PC-9 (cell line): ENCODE measurements at regions of chr9 and their contacts with region 1.

Region 1: DNA sequence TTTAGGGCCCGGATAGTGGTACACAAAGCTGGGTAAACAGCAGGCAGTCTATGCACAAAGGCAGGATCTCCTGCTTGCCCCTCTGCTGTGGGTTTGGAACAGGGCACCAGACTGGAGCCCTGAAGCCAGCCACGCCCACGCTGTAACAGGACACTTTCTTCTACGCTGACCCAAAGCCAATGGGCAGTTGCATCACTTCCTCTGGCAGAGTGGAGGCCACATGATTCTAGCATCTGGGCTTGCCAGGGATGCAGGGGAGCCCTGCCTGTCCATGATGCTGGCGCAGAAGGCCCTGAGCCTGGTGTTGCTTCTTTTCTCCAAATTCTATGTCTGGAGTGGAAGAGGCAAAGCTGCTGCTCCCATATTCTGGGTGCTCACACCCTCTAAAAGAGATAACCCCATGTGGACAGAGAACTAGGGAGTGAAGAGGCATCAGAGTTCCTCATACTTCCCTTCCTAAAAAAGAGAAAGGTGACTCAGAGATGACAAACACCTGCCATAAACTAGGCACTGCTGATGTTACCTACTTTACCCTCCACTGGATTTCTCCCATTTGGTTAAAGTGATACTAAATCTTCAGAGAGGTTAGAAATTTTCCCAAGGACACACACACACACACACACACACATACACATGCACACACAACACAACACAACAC is 260.3 kb upstream of the KLF4 start:
- DNase-seq: peak; percentile 86 to 87
- H3K4me3 ChIP-seq: peak overlapping the region; percentile 25; the same call in 1 of the 2 replicates
- H3K27ac ChIP-seq: peak overlapping the region; percentile 99
- H3K4me1 ChIP-seq: peaks cover 62% of the 10 kb centered on the region
- H3K27me3 ChIP-seq: no peaks in the 10 kb centered on the region
- CTCF ChIP-seq: no peak

Region 2: DNA sequence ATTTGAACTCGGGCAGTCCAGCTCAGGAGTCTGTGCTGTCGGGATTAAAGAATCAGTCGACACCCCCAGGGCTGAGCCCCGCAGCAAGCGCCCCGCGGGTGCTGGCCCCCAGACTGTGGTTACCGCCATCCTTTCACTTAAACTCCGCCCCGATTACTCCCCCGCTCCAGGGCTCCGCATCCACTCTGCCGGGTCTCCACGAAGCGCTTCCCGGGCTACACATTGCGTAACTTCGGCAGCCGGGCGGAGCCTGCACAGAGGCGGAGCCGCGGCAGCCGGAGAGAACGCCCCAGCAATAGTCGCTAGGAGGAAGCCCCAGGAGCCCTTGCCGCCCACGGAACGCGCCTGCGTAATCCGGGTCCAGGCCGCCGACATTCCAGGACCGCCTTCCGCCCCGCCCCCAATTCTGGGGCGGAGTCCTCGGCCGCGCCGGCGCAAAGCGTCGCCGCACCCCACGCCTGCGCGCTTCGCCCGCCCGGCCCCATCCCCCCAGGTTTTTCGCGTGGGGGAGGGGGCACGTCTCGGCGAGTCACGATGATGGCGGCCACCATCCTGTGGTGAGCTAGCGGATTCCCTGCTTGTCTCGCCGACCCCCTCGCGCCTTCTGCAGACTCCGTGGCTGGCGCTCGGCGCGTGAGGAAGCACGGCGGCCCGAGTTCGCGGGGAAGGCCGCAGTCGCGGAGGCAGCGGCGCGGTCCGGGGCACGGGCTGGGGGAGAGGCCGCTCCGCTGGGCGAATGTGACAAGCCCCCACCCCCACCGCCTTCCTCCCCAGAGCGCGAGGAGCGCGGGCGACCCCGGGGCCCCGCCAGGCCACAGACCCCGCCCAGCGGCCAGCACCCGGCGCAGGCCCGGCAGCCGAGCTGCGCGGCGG is 466.9 kb before region 1 on chr9 and contains the start of gene RAD23B:
- CTCF ChIA-PET with region 1: no interaction called
- POLR2A ChIA-PET with region 1: no interaction called
- intact Hi-C with region 1: loop called (anchors 10 kb)
- DNase-seq: peak; percentile 94 to 99
- H3K4me3 ChIP-seq: peak within 1 kb of the TSS; percentile 77
- H3K27ac ChIP-seq: peak within 1 kb of the TSS; percentile 88
- H3K4me1 ChIP-seq: peaks cover 58% of the 10 kb centered on the region
- H3K27me3 ChIP-seq: no peaks in the 10 kb centered on the region
- CTCF ChIP-seq: no peak
- total RNA-seq, gene RAD23B: 164 and 176 TPM in 2 replicates

Region 3: DNA sequence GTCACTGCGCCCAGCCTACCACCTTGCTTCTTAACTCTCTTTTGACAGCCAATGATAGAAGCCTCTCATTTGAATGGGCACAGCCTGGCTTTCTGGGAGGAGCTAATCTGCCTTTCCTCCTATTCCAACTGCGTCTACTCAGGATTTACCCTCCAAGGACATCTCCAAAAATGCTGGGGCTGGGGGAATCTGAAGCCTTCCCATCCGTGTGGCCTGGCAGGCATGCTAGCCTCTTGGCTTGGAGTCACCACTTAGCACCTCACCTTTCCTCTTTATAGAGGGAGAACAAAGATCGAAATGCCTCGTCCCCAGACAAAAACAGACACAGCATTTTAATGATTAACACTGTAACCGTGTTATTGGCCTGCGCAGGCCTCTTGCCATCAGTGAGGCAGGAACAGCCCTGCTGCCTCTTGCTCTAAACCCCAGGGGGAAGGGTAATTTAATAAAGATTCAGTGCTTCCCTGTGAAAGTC is 152.1 kb before region 1 on chr9:
- CTCF ChIA-PET with region 1: no interaction called
- POLR2A ChIA-PET with region 1: no interaction called
- intact Hi-C with region 1: no loop called
- DNase-seq: no peak
- H3K4me3 ChIP-seq: no peak overlapping the region
- H3K27ac ChIP-seq: no peak overlapping the region
- H3K4me1 ChIP-seq: no peaks in the 10 kb centered on the region
- H3K27me3 ChIP-seq: no peaks in the 10 kb centered on the region
- CTCF ChIP-seq: no peak

Region 4: DNA sequence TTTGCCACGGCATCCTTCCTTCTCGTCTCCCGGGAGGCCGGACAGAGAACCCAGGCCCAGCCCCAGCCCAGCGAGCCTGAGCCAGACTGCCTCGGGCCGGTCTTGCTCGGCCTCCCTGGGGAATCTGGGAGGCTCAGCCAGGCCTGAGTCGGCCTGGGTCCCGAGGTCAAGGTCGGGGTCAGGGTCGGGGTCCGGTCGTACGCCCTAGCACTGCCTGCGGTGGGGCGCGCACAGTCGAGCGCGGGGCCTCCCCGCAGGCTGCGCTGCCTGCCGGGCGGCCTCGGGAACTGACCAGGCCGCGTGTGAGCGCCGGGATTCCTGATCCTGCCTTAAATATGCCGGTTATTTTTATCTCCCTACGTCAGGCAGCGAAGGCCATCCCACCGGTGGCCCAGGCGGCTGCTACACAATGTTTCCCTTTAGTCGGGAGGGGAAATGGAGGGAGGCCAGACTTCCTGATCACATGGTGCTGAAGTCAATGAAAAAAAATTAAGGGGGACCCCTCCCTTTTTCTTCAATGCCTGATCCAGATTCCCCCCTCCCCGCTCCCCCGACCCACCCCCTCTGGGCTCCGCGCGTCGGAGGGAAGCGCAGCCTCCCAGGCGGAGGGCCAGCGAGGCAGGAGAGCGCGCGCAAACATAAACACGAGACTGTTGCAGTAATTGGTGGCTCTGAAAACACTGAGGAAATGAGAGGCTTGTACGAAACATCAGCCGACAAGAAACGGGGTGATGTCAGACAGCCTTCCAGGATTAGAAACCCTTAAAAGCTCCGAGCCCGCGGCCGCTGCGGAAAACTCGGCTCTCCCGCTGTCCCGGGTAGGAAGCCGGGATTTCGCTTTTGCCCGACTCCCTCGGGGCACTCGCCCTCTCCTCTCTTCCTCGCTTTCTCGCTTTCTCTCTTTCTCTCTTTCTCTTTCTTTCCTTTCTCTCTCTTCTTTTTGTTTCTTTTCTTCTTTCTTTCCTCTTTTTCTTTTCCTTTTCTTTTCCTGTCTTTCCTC is 112.2 kb before region 1 on chr9:
- CTCF ChIA-PET with region 1: no interaction called
- POLR2A ChIA-PET with region 1: no interaction called
- intact Hi-C with region 1: loop called (anchors 5 kb)
- DNase-seq: peak in 1 of 2 experiments; percentile 44
- H3K4me3 ChIP-seq: no peak overlapping the region
- H3K27ac ChIP-seq: no peak overlapping the region
- H3K4me1 ChIP-seq: no peaks in the 10 kb centered on the region
- H3K27me3 ChIP-seq: no peaks in the 10 kb centered on the region
- CTCF ChIP-seq: no peak

Region 5: GRCh38 chr9:108182950-108183381 is 433.1 kb after region 1 on chr9:
- CTCF ChIA-PET with region 1: no interaction called
- POLR2A ChIA-PET with region 1: no interaction called
- intact Hi-C with region 1: loop called (anchors 10 kb)
- DNase-seq: no peak
- H3K4me3 ChIP-seq: no peak overlapping the region
- H3K27ac ChIP-seq: no peak overlapping the region
- H3K4me1 ChIP-seq: no peaks in the 10 kb centered on the region
- H3K27me3 ChIP-seq: no peaks in the 10 kb centered on the region
- CTCF ChIP-seq: no peak

Region 6: GRCh38 chr9:108813951-108814601 is 1064.2 kb after region 1 on chr9:
- CTCF ChIA-PET with region 1: no interaction called
- POLR2A ChIA-PET with region 1: no interaction called
- intact Hi-C with region 1: loop called (anchors 10 kb)
- DNase-seq: peak; percentile 73 to 90
- H3K4me3 ChIP-seq: no peak overlapping the region
- H3K27ac ChIP-seq: 0 out of 2 replicates have a peak overlapping the region, but pooled peaks have one; percentile 35
- H3K4me1 ChIP-seq: peaks cover 20% of the 10 kb centered on the region
- H3K27me3 ChIP-seq: no peaks in the 10 kb centered on the region
- CTCF ChIP-seq: peak; percentile 87